SK-N-SH (cell line): ENCODE measurements at regions of chr7 and their contacts with region 1.

Region 1: GRCh38 chr7:133742709-133743538 is 384.2 kb upstream of the LRGUK start:
- DNase-seq: peak; percentile 36
- H3K4me3 ChIP-seq: no peak overlapping the region
- H3K27ac ChIP-seq: peak overlapping the region; percentile 10 to 100; a peak in 3 of 4 replicates
- H3K4me1 ChIP-seq: peaks cover 14 to 80% of the 10 kb centered on the region in 2 experiments; a peak in 3 of 4 replicates
- H3K27me3 ChIP-seq: no peaks in the 10 kb centered on the region
- CTCF ChIP-seq: peak; percentile 95
- EP300 ChIP-seq: peak; percentile 49 to 89; a peak in 3 of 4 replicates
- RAD21 ChIP-seq: peak; percentile 95

Region 2: GRCh38 chr7:133556048-133556447 is 186.9 kb before region 1 on chr7:
- CTCF ChIA-PET with region 1: interaction called, 18 read pairs
- POLR2A ChIA-PET with region 1: interaction called, 6 read pairs
- DNase-seq: peak; percentile 43
- H3K4me3 ChIP-seq: no peak overlapping the region
- H3K27ac ChIP-seq: peak overlapping the region in 1 of 2 experiments; percentile 100; a peak in 2 of 4 replicates
- H3K4me1 ChIP-seq: peaks cover 0 to 42% of the 10 kb centered on the region in 2 experiments; a peak in 2 of 4 replicates
- H3K27me3 ChIP-seq: no peaks in the 10 kb centered on the region
- CTCF ChIP-seq: no peak
- EP300 ChIP-seq: peak in 1 of 2 experiments; percentile 99; a peak in 2 of 4 replicates
- RAD21 ChIP-seq: peak; percentile 51

Region 3: DNA sequence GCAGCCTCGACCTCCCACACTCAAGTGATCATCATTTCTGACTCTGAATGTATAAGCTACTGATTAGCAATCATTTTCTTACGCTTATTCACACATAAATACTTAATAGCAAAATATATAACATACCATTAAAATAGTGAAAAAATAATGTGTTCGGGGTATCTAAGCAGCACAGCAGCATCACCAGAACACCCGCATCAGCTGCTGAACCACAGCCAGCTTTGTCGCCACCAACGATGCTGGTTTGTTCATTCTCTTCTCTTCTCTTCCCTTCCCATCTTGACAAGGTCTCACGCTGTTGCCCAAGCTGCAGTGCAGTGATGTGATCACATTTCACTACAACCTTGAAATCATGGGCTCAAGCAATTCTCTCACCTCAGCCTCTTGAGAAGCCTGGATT is 40.8 kb before region 1 on chr7:
- CTCF ChIA-PET with region 1: interaction called, 10 read pairs
- POLR2A ChIA-PET with region 1: no interaction called
- DNase-seq: no peak
- H3K4me3 ChIP-seq: no peak overlapping the region
- H3K27ac ChIP-seq: no peak overlapping the region
- H3K4me1 ChIP-seq: peaks cover 37 to 40% of the 10 kb centered on the region in 2 experiments; a peak in 3 of 4 replicates
- H3K27me3 ChIP-seq: no peaks in the 10 kb centered on the region
- CTCF ChIP-seq: no peak
- EP300 ChIP-seq: no peak
- RAD21 ChIP-seq: no peak

Region 4: GRCh38 chr7:133753513-133753912 is 10.6 kb after region 1 on chr7:
- CTCF ChIA-PET with region 1: interaction called, 33 read pairs
- POLR2A ChIA-PET with region 1: no interaction called
- DNase-seq: no peak
- H3K4me3 ChIP-seq: no peak overlapping the region
- H3K27ac ChIP-seq: peak overlapping the region in 1 of 2 experiments; percentile 100; a peak in 2 of 4 replicates
- H3K4me1 ChIP-seq: peaks cover 0 to 24% of the 10 kb centered on the region in 2 experiments; a peak in 2 of 4 replicates
- H3K27me3 ChIP-seq: no peaks in the 10 kb centered on the region
- CTCF ChIP-seq: no peak
- EP300 ChIP-seq: no peak
- RAD21 ChIP-seq: no peak

Region 5: GRCh38 chr7:133794479-133794878 is 51.6 kb after region 1 on chr7:
- CTCF ChIA-PET with region 1: interaction called, 80 read pairs
- POLR2A ChIA-PET with region 1: interaction called, 26 read pairs
- DNase-seq: no peak
- H3K4me3 ChIP-seq: no peak overlapping the region
- H3K27ac ChIP-seq: peak overlapping the region in 1 of 2 experiments; percentile 100; a peak in 2 of 4 replicates
- H3K4me1 ChIP-seq: peaks cover 11 to 49% of the 10 kb centered on the region in 2 experiments; a peak in 3 of 4 replicates
- H3K27me3 ChIP-seq: no peaks in the 10 kb centered on the region
- CTCF ChIP-seq: no peak
- EP300 ChIP-seq: peak in 1 of 2 experiments; percentile 40; a peak in 1 of 4 replicates
- RAD21 ChIP-seq: no peak

Region 6: DNA sequence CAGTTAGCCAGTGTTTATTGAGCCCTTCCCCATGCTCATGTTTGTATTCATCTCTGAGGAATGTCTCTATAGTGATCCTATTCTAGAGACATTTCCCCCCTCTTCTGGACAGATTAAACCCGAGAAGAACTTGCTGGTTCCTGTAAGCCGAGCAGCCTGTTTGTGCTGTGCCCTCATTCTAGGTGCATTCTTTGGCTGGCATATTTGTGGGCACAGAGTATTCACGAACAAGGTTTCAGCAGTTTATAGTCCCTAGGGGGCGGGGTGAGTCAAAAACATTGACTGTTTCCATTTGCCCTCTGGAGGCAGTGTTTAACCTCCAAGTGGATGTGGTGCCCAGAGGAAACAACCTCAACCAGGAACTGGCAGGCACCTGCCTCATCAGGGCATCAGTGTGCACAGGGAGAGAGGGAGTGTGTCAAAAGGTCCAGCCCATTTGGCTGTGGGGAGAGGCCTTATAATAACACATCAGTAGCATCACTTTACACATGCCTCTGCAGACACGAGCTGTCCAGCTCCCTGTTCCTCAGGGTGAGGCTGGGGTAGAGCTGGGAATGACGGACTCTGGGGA is 110.9 kb after region 1 on chr7:
- CTCF ChIA-PET with region 1: interaction called, 69 read pairs
- POLR2A ChIA-PET with region 1: interaction called, 4 read pairs
- DNase-seq: peak; percentile 72
- H3K4me3 ChIP-seq: peak overlapping the region in 1 of 2 experiments; percentile 7; a peak in 2 of 4 replicates
- H3K27ac ChIP-seq: peak overlapping the region; percentile 85 to 98
- H3K4me1 ChIP-seq: peaks cover 30 to 53% of the 10 kb centered on the region in 2 experiments
- H3K27me3 ChIP-seq: no peaks in the 10 kb centered on the region
- CTCF ChIP-seq: peak; percentile 94
- EP300 ChIP-seq: peak; percentile 47 to 88
- RAD21 ChIP-seq: peak; percentile 78